ENCODE measurements at regions of chr6 and their contacts with region 1.

Region 1: GRCh38 chr6:31619805-31620585 is 520 bp upstream of the PRRC2A start:
- DNase-seq: peak; percentile 100
- H3K4me3 ChIP-seq: peak overlapping the region in 2 of 3 experiments; percentile 57 to 80
- H3K27ac ChIP-seq: peak overlapping the region; percentile 95
- H3K4me1 ChIP-seq: peaks cover 13% of the 10 kb centered on the region
- H3K27me3 ChIP-seq: no peaks in the 10 kb centered on the region
- CTCF ChIP-seq: no peak
- POLR2A ChIP-seq: peak; percentile 73

Region 2: DNA sequence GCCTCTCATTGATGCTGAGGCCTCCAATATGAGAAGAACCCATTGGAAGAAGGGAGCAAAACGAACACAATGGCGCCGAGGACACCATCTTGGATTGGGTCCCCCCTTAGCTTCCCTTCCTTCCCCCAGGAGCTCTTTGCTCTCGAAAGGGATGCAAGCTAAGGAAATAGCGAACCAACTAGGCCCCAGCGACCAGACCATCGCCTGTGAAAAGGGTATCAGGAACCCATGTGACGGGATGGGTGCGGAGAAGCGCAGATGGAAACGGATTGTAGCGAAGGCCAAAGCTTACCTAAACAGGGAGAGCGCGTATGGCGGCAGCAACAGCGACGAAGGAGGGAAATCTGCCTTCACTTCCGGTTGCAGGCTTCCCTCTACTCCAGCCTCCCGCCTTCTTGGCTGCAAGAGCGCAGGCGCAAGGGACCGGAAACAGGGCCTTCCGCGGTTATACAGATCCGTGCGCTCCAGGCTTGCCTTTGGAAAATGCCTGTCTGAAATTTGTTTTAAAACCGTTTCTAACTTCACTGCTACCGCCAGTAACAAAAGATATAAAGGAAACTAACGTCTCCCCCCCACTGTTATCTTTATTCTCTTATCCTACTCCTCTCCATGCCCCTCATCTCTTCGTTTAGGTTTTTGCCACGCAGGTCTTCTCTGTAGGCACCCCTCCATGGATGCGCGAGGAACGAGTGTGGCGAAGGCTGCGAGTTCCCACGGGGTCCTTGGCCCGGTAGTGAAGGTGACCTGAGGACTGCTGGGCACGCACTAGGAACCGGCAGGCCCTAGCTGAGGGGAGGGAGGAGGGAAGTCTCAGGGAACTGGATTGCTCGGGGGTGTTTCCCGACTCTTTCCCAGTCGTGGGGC is 78.1 kb before region 1 on chr6 and contains the start of gene DDX39B:
- CTCF ChIA-PET with region 1: interaction called, 4 read pairs
- POLR2A ChIA-PET with region 1: interaction called, 3 read pairs
- dilution Hi-C with region 1: no loop called
- intact Hi-C with region 1: loop called (anchors 1 kb)
- DNase-seq: peak; percentile 97
- H3K4me3 ChIP-seq: peak within 1 kb of the TSS; percentile 59 to 95 (median 80)
- H3K27ac ChIP-seq: peak within 1 kb of the TSS; percentile 85
- H3K4me1 ChIP-seq: peaks cover 28% of the 10 kb centered on the region
- H3K27me3 ChIP-seq: no peaks in the 10 kb centered on the region
- CTCF ChIP-seq: no peak
- POLR2A ChIP-seq: peak; percentile 96
- total RNA-seq, gene DDX39B: 453 and 481 TPM in 2 replicates

Region 3: GRCh38 chr6:31665501-31666336 is 45.7 kb after region 1 on chr6 and contains the start of gene CSNK2B:
- CTCF ChIA-PET with region 1: no interaction called
- POLR2A ChIA-PET with region 1: interaction called, 3 read pairs
- dilution Hi-C with region 1: no loop called
- intact Hi-C with region 1: loop called (anchors 1 kb)
- DNase-seq: peak; percentile 97
- H3K4me3 ChIP-seq: peak within 1 kb of the TSS; percentile 70 to 94 (median 72)
- H3K27ac ChIP-seq: peak within 1 kb of the TSS; percentile 77
- H3K4me1 ChIP-seq: peaks cover 28% of the 10 kb centered on the region
- H3K27me3 ChIP-seq: no peaks in the 10 kb centered on the region
- CTCF ChIP-seq: peak in 1 of 2 donors; percentile 13
- POLR2A ChIP-seq: peak; percentile 54
- total RNA-seq, gene CSNK2B: 206 and 214 TPM in 2 replicates

Region 4: DNA sequence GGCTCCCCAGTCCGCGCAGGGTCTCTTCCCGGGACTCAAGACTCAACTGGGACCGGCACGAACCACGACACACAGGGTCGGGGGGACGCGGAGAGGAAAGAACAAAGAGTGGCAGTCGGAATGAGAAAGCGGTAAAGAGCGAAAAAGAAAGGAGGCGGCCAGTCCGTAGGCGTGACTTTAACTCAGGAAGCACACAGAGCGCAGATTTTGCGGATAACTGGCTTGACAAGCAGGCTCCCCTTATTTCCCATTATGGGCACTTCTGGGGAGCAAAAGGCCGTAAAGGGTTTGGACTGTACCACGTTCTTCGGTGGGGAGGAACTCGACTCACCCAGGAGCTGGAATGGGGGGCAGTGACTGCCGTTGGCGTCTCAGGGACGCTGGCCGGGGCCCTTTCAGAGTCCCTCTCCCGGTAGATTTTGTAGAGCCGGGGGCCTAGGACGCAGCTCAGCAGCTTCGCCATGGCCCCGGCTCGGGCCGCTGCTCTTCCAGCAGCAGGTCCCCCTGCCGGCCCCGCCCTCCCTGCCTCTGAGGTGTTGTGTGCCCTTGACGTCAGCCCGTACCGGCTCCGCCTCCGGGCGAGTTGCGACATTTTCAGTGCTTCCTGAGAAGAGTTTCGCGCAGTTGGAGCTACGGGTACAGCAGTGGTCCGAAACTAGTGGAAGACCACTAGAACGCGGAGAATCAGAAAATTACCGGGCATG is 83.0 kb after region 1 on chr6 and contains the start of gene ABHD16A:
- CTCF ChIA-PET with region 1: no interaction called
- POLR2A ChIA-PET with region 1: no interaction called
- dilution Hi-C with region 1: no loop called
- intact Hi-C with region 1: loop called (anchors 1 kb)
- DNase-seq: peak; percentile 99
- H3K4me3 ChIP-seq: peak within 1 kb of the TSS; percentile 59 to 80 (median 74)
- H3K27ac ChIP-seq: peak within 1 kb of the TSS; percentile 77
- H3K4me1 ChIP-seq: peaks cover 11% of the 10 kb centered on the region
- H3K27me3 ChIP-seq: no peaks in the 10 kb centered on the region
- CTCF ChIP-seq: peak in 1 of 2 donors; percentile 3
- POLR2A ChIP-seq: peak; percentile 97
- total RNA-seq, gene ABHD16A: 41.3 and 48.9 TPM in 2 replicates

Region 5: DNA sequence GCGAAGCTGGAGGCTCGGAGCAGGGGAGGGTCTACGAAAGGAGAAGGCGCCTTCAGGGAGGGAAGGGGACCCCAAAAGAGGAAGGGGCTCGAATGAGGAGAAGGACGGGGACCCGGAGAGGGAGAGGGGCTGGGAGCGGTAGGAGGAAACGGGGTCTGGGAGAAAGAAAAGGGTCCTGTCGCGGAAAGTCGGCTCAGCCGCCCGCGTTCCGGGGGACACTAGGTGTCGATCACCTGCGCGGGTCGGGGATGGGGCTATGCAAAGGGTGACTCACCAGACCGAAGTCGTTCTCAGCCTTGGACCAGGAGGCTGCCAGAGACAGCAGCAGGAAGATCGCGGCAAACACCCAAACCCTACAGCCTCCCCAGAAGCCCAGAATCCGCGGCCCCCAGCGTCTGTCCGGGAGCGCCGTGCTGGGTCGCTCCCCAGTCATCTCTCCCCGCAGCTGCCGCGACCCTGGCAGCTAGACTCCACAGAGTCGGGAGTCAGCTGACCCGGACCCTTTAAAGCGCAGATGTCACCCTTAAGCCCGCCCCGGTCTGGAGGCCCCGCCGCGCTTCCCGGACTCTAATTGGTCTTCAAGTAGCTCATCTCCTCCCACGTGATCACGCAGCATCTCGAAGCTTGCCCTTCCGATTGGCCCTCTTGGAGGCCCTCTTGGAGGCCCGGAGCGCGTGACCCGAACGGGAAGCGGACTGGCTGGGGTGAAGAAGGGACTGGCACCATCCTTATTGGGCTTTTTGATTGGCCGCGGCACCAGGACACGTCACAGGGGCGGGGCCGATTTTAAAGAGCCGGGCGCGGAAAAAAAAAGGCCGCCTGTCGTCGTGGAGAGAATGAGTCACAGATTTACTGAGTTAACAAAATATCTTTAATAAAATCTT is 242.6 kb after region 1 on chr6 and contains the start of gene NEU1:
- CTCF ChIA-PET with region 1: no interaction called
- POLR2A ChIA-PET with region 1: no interaction called
- dilution Hi-C with region 1: no loop called
- intact Hi-C with region 1: loop called (anchors 1 kb)
- DNase-seq: peak; percentile 100
- H3K4me3 ChIP-seq: peak within 1 kb of the TSS; percentile 71 to 88 (median 83)
- H3K27ac ChIP-seq: peak within 1 kb of the TSS; percentile 77
- H3K4me1 ChIP-seq: peaks cover 7% of the 10 kb centered on the region
- H3K27me3 ChIP-seq: no peaks in the 10 kb centered on the region
- CTCF ChIP-seq: no peak
- POLR2A ChIP-seq: peak; percentile 99
- total RNA-seq, gene NEU1: 61.3 and 62.8 TPM in 2 replicates